B cell (primary cell): ENCODE measurements at regions of chr9 and their contacts with region 1.

Region 1: DNA sequence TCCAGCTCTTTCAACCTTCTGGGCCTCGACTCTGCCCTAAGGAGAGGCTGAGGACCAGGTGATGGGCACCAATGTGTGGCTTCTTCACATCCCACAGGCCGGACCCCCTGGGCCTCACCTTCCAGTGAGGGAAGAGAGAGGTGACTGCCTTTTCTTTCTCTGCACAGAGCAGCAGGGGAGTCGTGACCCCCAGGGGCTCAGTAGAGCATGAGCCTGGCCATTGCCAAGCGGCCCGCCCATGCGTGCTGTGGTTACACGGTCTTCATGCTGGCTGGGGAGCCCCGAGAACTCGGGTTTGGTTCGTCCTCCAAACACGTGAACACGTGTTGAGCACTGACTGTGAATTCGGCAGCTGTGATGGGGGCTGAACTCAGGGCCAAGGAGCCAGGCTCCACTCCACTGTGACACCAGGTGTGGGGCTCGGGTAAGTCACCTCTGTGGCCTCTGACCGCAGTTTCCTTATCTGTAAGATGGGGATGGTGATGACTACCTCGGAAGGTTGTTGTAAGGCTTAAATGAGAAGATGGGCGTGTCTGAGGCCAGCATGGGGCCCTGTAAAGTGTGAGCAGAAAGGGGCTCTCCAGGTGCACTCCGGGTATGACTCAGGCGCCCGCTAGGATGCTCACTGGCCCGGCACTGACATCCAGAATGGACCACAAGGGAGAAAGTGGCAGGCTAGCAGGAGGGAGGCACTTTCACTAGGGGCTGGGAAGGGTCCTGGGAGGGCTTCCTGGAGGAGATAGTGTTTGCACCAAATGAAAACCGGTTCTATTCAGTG is 13.4 kb upstream of the GRHPR start:
- DNase-seq: peak; percentile 99
- ATAC-seq: peak; percentile 82
- H3K4me3 ChIP-seq: no peak overlapping the region
- H3K4me3 Mint-ChIP-seq: peak overlapping the region; percentile 78
- H3K27ac ChIP-seq: peak overlapping the region; percentile 72 to 91
- H3K27ac Mint-ChIP-seq: peak overlapping the region; percentile 97
- H3K4me1 ChIP-seq: peaks cover 58 to 72% of the 10 kb centered on the region in 2 donors
- H3K4me1 Mint-ChIP-seq: peaks cover 78% of the 10 kb centered on the region
- H3K27me3 ChIP-seq: no peaks in the 10 kb centered on the region
- H3K27me3 Mint-ChIP-seq: no peaks in the 10 kb centered on the region
- CTCF ChIP-seq: peak; percentile 31

Region 2: DNA sequence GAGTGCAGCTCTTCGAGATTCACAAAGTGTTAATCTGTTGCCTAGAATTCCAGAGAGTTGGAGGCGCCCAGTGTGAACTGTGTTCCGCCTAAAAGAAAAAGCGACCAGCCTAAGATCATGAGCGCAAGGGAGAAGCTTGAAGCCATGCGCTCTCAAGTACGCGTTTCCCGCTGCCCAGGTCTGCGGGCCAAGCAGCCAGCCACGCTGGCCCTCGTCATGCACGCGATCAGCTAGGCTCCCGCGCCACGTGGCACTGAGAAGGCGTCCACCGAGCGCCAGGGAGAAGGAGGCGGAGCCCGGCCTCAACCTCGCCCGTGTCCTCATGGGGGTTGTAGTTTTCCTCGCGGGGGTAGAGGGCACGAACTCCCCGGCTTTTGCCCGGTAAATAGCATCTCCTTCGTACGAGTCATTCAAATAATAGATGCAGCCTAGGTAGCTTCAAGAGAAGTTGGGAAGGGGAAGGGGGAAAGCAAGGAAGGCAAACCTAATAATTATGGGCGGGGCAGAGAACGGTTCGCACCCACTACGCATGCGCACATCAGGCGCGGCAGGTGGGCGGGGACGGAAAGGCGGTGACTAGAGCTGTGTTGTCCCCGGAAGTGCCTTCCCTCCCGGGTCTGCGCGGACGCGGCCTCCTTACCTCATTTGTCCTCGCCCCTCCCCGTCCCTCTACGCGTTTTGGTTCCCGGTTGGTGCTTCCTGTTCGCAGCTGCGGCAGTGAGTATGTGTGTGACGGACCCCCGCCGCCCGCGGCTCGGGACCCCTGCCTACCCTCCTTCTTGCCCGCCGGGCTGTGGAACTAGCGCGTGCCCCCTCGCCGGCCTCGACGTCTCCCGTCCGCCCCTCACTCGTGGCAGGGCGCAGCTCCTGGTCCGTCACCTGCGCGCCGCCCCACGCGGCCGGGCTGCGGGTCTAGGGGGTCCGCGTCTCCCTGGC is 288.9 kb before region 1 on chr9 and contains the start of gene ZCCHC7:
- CTCF ChIA-PET with region 1: no interaction called
- POLR2A ChIA-PET with region 1: no interaction called
- intact Hi-C with region 1: no loop called
- DNase-seq: peak; percentile 98
- ATAC-seq: peak; percentile 92
- H3K4me3 ChIP-seq: peak within 1 kb of the TSS; percentile 80 to 97 (median 94)
- H3K4me3 Mint-ChIP-seq: peak within 1 kb of the TSS; percentile 100
- H3K27ac ChIP-seq: peak within 1 kb of the TSS; percentile 93 to 98
- H3K27ac Mint-ChIP-seq: peak within 1 kb of the TSS; percentile 100
- H3K4me1 ChIP-seq: peaks cover 36 to 44% of the 10 kb centered on the region in 2 donors
- H3K4me1 Mint-ChIP-seq: peaks cover 44% of the 10 kb centered on the region
- H3K27me3 ChIP-seq: no peaks in the 10 kb centered on the region
- H3K27me3 Mint-ChIP-seq: no peaks in the 10 kb centered on the region
- CTCF ChIP-seq: no peak
- total RNA-seq, gene ZCCHC7: 81.9 and 83.5 TPM in 2 replicates

Region 3: DNA sequence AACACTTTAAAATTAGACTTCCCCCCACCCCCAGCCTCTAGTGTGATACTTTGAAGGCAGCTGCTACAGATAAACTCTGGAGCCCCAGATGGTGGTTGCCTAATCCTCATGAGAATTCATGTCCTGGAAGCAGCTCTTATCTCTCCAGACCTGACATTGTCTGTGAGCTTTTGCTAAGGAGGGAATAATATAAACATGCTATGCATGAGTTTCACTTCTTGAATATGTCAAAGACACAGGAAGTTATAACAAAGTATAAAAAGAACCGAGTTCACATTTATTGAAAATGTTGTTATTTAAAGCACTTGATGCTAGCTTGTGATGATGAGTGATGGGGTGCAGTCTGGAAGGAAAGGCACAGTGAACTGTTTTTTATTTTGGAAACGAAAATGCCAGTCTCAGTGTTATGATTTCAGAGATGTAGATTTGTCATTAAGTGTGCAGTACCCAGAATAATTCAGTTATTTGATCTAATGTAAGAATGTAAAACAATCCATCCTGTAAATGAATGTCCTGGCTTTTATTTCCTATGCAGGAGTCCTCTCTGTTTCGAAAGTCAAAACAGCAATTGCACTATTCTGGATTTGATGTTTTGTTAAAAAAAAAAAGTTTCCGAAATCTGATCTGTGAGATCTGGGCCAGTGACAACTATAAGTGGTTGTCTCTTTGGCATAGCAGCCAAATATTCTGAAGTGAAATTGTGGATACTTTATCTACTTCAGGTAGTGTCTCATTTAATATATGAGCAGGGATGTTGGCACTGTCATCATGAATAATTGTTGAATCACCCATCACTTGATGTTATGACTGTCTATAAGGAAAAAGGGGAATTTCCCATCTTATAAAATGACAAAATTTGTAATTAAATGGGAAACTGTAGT is 211.7 kb before region 1 on chr9:
- CTCF ChIA-PET with region 1: no interaction called
- POLR2A ChIA-PET with region 1: no interaction called
- intact Hi-C with region 1: loop called (anchors 5 kb)
- DNase-seq: peak; percentile 83
- ATAC-seq: peak; percentile 79
- H3K4me3 ChIP-seq: peak overlapping the region in 3 of 5 experiments; percentile 13 to 35 (median 21)
- H3K4me3 Mint-ChIP-seq: peak overlapping the region; percentile 76
- H3K27ac ChIP-seq: peak overlapping the region; percentile 81 to 87
- H3K27ac Mint-ChIP-seq: peak overlapping the region; percentile 87
- H3K4me1 ChIP-seq: peaks cover 83 to 91% of the 10 kb centered on the region in 2 donors
- H3K4me1 Mint-ChIP-seq: peaks cover 82% of the 10 kb centered on the region
- H3K27me3 ChIP-seq: no peaks in the 10 kb centered on the region
- H3K27me3 Mint-ChIP-seq: no peaks in the 10 kb centered on the region
- CTCF ChIP-seq: no peak

Region 4: GRCh38 chr9:37262410-37262809 is 146.7 kb before region 1 on chr9:
- CTCF ChIA-PET with region 1: no interaction called
- POLR2A ChIA-PET with region 1: no interaction called
- intact Hi-C with region 1: no loop called
- DNase-seq: no peak
- ATAC-seq: no peak
- H3K4me3 ChIP-seq: no peak overlapping the region
- H3K4me3 Mint-ChIP-seq: no peak overlapping the region
- H3K27ac ChIP-seq: peak overlapping the region in 1 of 2 donors; percentile 61
- H3K27ac Mint-ChIP-seq: peak overlapping the region; percentile 64
- H3K4me1 ChIP-seq: peaks cover 28 to 63% of the 10 kb centered on the region in 2 donors
- H3K4me1 Mint-ChIP-seq: peaks cover 71% of the 10 kb centered on the region
- H3K27me3 ChIP-seq: no peaks in the 10 kb centered on the region
- H3K27me3 Mint-ChIP-seq: no peaks in the 10 kb centered on the region
- CTCF ChIP-seq: no peak

Region 5: GRCh38 chr9:37337301-37337890 is 71.7 kb before region 1 on chr9:
- CTCF ChIA-PET with region 1: interaction called, 4 read pairs
- POLR2A ChIA-PET with region 1: no interaction called
- intact Hi-C with region 1: loop called (anchors 1 kb)
- DNase-seq: peak; percentile 49
- ATAC-seq: peak; percentile 50
- H3K4me3 ChIP-seq: peak overlapping the region in 3 of 5 experiments; percentile 10 to 42 (median 10)
- H3K4me3 Mint-ChIP-seq: peak overlapping the region; percentile 82
- H3K27ac ChIP-seq: peak overlapping the region; percentile 34 to 77
- H3K27ac Mint-ChIP-seq: peak overlapping the region; percentile 88
- H3K4me1 ChIP-seq: peaks cover 57 to 86% of the 10 kb centered on the region in 2 donors
- H3K4me1 Mint-ChIP-seq: peaks cover 53% of the 10 kb centered on the region
- H3K27me3 ChIP-seq: no peaks in the 10 kb centered on the region
- H3K27me3 Mint-ChIP-seq: no peaks in the 10 kb centered on the region
- CTCF ChIP-seq: no peak

Region 6: DNA sequence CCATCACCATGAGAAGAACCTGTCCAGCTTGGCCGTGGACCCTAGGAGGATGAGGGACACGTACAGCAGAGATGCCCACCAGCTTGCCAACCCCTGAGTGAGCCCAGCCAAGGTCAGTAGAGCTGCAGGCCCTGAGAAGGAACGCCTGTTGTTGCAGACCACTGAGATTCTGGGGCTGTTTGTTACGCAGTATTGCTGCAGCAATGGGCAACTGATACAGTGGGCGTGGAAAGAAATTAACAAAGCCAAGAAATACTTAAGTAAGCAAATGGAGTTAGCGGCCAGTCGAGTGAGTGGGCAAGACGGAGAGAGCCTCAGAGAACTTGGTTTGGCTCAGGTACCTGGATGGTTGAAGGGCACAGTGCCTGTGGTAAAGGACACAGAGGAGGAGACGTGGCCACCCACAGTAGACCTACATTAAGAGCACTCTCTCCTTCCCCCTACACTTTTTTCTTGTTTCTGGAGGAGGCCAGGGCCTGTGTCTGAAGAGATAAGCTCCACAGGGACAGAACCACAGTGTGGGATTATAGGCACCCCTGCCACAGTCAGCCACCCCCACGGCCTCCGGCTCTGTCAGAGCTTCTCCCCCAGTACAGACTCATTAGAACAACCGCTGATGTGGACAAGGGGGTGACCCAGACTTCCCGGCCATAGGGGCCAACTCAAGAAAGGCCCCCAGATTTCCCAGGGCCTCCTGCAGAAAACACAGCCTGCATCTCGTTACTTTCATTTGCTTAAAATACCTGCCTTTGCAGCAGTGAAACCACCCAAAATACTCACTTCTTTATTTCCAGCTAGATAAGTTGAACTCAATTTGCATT is 26.8 kb before region 1 on chr9:
- CTCF ChIA-PET with region 1: interaction called, 125 read pairs
- POLR2A ChIA-PET with region 1: interaction called, 12 read pairs
- intact Hi-C with region 1: loop called (anchors 1 kb)
- DNase-seq: peak; percentile 73
- ATAC-seq: peak; percentile 22
- H3K4me3 ChIP-seq: peak overlapping the region in 1 of 5 experiments; percentile 27
- H3K4me3 Mint-ChIP-seq: peak overlapping the region; percentile 68
- H3K27ac ChIP-seq: peak overlapping the region; percentile 75 to 90
- H3K27ac Mint-ChIP-seq: peak overlapping the region; percentile 94
- H3K4me1 ChIP-seq: peaks cover 79 to 95% of the 10 kb centered on the region in 2 donors
- H3K4me1 Mint-ChIP-seq: peaks cover 84% of the 10 kb centered on the region
- H3K27me3 ChIP-seq: no peaks in the 10 kb centered on the region
- H3K27me3 Mint-ChIP-seq: no peaks in the 10 kb centered on the region
- CTCF ChIP-seq: no peak

Region 7: GRCh38 chr9:37398464-37399025 is 10.6 kb before region 1 on chr9:
- CTCF ChIA-PET with region 1: interaction called, 19 read pairs
- POLR2A ChIA-PET with region 1: interaction called, 6 read pairs
- intact Hi-C with region 1: no loop called
- DNase-seq: peak; percentile 30
- ATAC-seq: no peak
- H3K4me3 ChIP-seq: no peak overlapping the region
- H3K4me3 Mint-ChIP-seq: peak overlapping the region; percentile 67
- H3K27ac ChIP-seq: no peak overlapping the region
- H3K27ac Mint-ChIP-seq: peak overlapping the region; percentile 85
- H3K4me1 ChIP-seq: peaks cover 34 to 36% of the 10 kb centered on the region in 2 donors
- H3K4me1 Mint-ChIP-seq: peaks cover 57% of the 10 kb centered on the region
- H3K27me3 ChIP-seq: no peaks in the 10 kb centered on the region
- H3K27me3 Mint-ChIP-seq: no peaks in the 10 kb centered on the region
- CTCF ChIP-seq: no peak

Region 8: GRCh38 chr9:37449862-37450632 is 40.9 kb after region 1 on chr9:
- CTCF ChIA-PET with region 1: no interaction called
- POLR2A ChIA-PET with region 1: no interaction called
- intact Hi-C with region 1: no loop called
- DNase-seq: no peak
- ATAC-seq: no peak
- H3K4me3 ChIP-seq: no peak overlapping the region
- H3K4me3 Mint-ChIP-seq: no peak overlapping the region
- H3K27ac ChIP-seq: no peak overlapping the region
- H3K27ac Mint-ChIP-seq: no peak overlapping the region
- H3K4me1 ChIP-seq: peaks cover 0 to 3% of the 10 kb centered on the region in 2 donors
- H3K4me1 Mint-ChIP-seq: peaks cover 39% of the 10 kb centered on the region
- H3K27me3 ChIP-seq: no peaks in the 10 kb centered on the region
- H3K27me3 Mint-ChIP-seq: no peaks in the 10 kb centered on the region
- CTCF ChIP-seq: no peak